ENCODE measurements at regions of chr2 and their contacts with region 1.

Region 1: GRCh38 chr2:135913727-135914365 is 37.6 kb upstream of the MCM6 start:
- DNase-seq: peak; percentile 59
- H3K4me3 ChIP-seq: no peak overlapping the region
- H3K27ac ChIP-seq: no peak overlapping the region
- H3K4me1 ChIP-seq: peaks cover 10% of the 10 kb centered on the region
- H3K27me3 ChIP-seq: no peaks in the 10 kb centered on the region
- CTCF ChIP-seq: peak; percentile 45 to 52
- POLR2A ChIP-seq: no peak

Region 2: DNA sequence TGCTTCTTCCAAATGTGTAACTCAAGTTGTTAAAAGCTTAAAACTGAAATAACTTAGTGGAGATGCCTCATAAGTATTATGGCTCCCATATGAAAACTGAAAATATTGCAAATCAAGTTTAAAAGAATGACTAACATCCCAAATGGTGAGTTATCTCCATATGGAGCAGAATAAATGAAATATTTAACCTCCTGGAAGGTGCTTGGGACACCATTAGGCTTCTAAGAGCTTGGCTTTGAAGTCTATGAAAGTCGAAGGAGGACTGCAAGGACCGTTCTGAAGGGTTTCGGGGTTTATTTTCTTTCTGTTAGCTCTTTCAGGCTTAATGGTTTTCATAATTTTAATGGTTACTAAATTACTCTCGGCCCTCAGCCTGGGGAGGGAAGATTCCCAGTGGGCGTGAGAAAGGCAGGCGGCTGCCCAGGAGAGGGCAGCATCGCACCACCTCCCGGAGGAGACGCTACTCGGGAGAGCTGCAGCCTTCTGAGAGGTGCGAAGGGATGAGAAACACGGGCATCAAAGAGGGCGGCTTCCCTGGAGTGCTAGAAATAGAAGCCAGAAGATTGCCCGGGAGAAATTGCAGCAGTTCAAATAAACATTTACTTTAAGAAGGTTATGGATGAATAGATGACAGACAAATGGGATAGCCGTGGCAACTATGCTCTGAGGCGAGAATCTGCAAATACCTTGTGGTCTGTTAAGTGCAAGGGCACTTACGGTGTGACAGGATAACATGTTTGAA is 909.7 kb before region 1 on chr2:
- CTCF ChIA-PET with region 1: interaction called, 12 read pairs
- POLR2A ChIA-PET with region 1: no interaction called
- dilution Hi-C with region 1: no loop called
- intact Hi-C with region 1: no loop called
- DNase-seq: peak; percentile 66
- H3K4me3 ChIP-seq: no peak overlapping the region
- H3K27ac ChIP-seq: no peak overlapping the region
- H3K4me1 ChIP-seq: no peaks in the 10 kb centered on the region
- H3K27me3 ChIP-seq: peaks cover 13 to 18% of the 10 kb centered on the region in 2 experiments
- CTCF ChIP-seq: peak; percentile 95 to 96
- POLR2A ChIP-seq: no peak

Region 3: DNA sequence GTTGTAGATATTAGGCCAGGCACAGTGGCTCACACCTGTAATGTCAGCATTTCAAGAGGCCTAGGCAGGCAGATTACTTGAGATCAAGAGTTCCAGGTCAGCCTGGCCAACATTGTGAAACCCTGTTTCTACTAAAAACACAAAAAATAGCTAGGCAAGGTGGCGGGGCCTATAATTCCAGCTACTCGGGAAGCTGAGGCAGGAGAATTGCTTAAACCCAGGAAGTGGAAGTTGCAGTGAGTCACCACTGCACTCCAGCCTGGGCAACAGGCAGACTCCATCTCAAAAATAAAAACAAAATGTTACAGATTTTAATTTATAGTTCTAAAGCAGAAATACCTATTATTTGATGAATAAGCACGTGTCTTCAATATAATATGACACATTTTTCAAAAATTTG is 237.8 kb before region 1 on chr2:
- CTCF ChIA-PET with region 1: no interaction called
- POLR2A ChIA-PET with region 1: no interaction called
- dilution Hi-C with region 1: no loop called
- intact Hi-C with region 1: no loop called
- DNase-seq: peak; percentile 18
- H3K4me3 ChIP-seq: no peak overlapping the region
- H3K27ac ChIP-seq: peak overlapping the region; percentile 3
- H3K4me1 ChIP-seq: peaks cover 11% of the 10 kb centered on the region
- H3K27me3 ChIP-seq: no peaks in the 10 kb centered on the region
- CTCF ChIP-seq: no peak
- POLR2A ChIP-seq: no peak

Region 4: GRCh38 chr2:135931776-135932443 is 18.1 kb after region 1 on chr2:
- CTCF ChIA-PET with region 1: interaction called, 12 read pairs
- POLR2A ChIA-PET with region 1: no interaction called
- dilution Hi-C with region 1: no loop called
- intact Hi-C with region 1: no loop called
- DNase-seq: no peak
- H3K4me3 ChIP-seq: no peak overlapping the region
- H3K27ac ChIP-seq: no peak overlapping the region
- H3K4me1 ChIP-seq: no peaks in the 10 kb centered on the region
- H3K27me3 ChIP-seq: no peaks in the 10 kb centered on the region
- CTCF ChIP-seq: no peak
- POLR2A ChIP-seq: no peak

Region 5: GRCh38 chr2:136117909-136118818 is 204.3 kb after region 1 on chr2 and contains the start of gene CXCR4:
- CTCF ChIA-PET with region 1: interaction called, 3 read pairs
- POLR2A ChIA-PET with region 1: no interaction called
- dilution Hi-C with region 1: no loop called
- intact Hi-C with region 1: loop called (anchors 1 kb)
- DNase-seq: peak; percentile 52
- H3K4me3 ChIP-seq: peak within 1 kb of the TSS; percentile 45 to 73 (median 69)
- H3K27ac ChIP-seq: no peak within 1 kb of the TSS
- H3K4me1 ChIP-seq: peaks cover 23% of the 10 kb centered on the region
- H3K27me3 ChIP-seq: peaks cover 48 to 73% of the 10 kb centered on the region in 2 experiments
- CTCF ChIP-seq: peak; percentile 16 to 32
- POLR2A ChIP-seq: peak; percentile 55
- total RNA-seq, gene CXCR4: 52.4 and 81.0 TPM in 2 replicates

Region 6: DNA sequence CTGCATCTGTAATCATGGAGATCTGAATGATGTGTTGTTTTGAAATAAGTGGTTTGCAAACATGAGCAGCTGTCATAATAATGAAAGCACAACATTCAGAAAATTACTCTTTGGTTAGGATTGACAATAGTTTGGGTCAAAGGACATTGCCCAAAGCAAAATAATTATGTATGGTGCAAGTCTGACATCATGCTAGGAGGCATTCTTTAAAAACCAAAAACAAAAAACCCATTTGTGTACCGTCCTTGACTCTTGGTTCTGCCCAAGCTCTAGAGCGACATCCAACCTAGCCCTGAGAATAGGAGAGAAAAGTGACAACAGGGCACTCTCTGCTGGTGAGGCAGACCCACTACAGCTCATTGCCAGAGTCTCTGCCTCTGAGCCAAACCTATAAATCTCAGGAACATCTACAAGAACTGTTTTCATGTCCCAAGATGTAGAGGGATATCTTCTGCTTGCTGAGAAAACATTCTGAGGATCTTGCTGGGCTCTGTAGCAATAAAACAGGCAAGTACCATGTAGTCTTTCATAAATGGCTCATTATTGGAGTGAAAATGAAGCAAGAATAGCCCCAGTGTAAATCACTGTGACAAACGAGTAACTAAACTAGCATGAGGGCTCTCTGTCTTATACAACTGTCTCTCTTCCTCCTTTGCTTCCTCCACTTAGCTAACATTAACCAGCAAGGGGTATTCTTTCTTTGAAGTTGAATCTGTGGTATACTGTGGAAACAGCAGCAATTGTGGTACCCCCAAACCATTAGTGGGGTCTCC is 470.9 kb after region 1 on chr2:
- CTCF ChIA-PET with region 1: interaction called, 127 read pairs
- POLR2A ChIA-PET with region 1: no interaction called
- dilution Hi-C with region 1: no loop called
- intact Hi-C with region 1: loop called (anchors 1 kb)
- DNase-seq: peak; percentile 44
- H3K4me3 ChIP-seq: no peak overlapping the region
- H3K27ac ChIP-seq: no peak overlapping the region
- H3K4me1 ChIP-seq: no peaks in the 10 kb centered on the region
- H3K27me3 ChIP-seq: peaks cover 0 to 6% of the 10 kb centered on the region in 2 experiments
- CTCF ChIP-seq: peak; percentile 62 to 70
- POLR2A ChIP-seq: no peak

Region 7: GRCh38 chr2:137838255-137839092 is 1924.6 kb after region 1 on chr2:
- CTCF ChIA-PET with region 1: interaction called, 11 read pairs
- POLR2A ChIA-PET with region 1: no interaction called
- dilution Hi-C with region 1: no loop called
- intact Hi-C with region 1: loop called (anchors 5 kb)
- DNase-seq: peak; percentile 50
- H3K4me3 ChIP-seq: no peak overlapping the region
- H3K27ac ChIP-seq: no peak overlapping the region
- H3K4me1 ChIP-seq: no peaks in the 10 kb centered on the region
- H3K27me3 ChIP-seq: no peaks in the 10 kb centered on the region
- CTCF ChIP-seq: peak; percentile 18 to 33
- POLR2A ChIP-seq: no peak

Measured in endothelial cell of umbilical vein (primary cell).